ENCODE measurements at regions of chr13 and their contacts with region 1.

Region 1: DNA sequence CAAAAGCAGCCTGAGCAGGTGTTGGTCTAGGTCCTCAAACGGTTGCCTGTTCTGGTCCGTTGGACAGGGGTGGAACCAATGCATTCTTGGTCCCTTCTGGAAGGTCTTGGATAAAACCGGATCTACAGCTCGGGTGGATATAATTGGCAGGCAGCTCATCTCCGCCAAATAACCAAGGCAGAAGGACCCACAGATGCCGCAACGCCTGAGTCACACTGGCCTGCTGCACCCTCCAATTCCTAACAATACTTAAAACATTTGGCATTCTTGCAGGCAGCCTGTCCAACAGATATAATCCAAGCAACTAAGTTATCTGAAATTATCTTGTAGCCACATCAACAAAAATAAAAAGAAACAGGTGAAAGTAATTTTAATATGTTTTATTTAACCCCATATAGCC is 59.0 kb upstream of the FGF14 start:
- DNase-seq: no peak
- H3K4me3 Mint-ChIP-seq: no peak overlapping the region
- H3K27ac Mint-ChIP-seq: no peak overlapping the region
- H3K4me1 Mint-ChIP-seq: peaks cover 6% of the 10 kb centered on the region
- H3K27me3 Mint-ChIP-seq: peaks cover 9% of the 10 kb centered on the region

Region 2: GRCh38 chr13:101144808-101145419 is 1315.9 kb before region 1 on chr13:
- CTCF ChIA-PET with region 1: no interaction called
- intact Hi-C with region 1: loop called (anchors 1 kb)
- DNase-seq: peak; percentile 28
- H3K4me3 Mint-ChIP-seq: no peak overlapping the region
- H3K27ac Mint-ChIP-seq: no peak overlapping the region
- H3K4me1 Mint-ChIP-seq: no peaks in the 10 kb centered on the region
- H3K27me3 Mint-ChIP-seq: peaks cover 35% of the 10 kb centered on the region

Region 3: GRCh38 chr13:101942038-101942437 is 518.8 kb before region 1 on chr13:
- CTCF ChIA-PET with region 1: no interaction called
- intact Hi-C with region 1: loop called (anchors 1 kb)
- DNase-seq: peak; percentile 26
- H3K4me3 Mint-ChIP-seq: no peak overlapping the region
- H3K27ac Mint-ChIP-seq: no peak overlapping the region
- H3K4me1 Mint-ChIP-seq: no peaks in the 10 kb centered on the region
- H3K27me3 Mint-ChIP-seq: peaks cover 2% of the 10 kb centered on the region

Region 4: GRCh38 chr13:102141625-102142472 is 319.0 kb before region 1 on chr13:
- CTCF ChIA-PET with region 1: interaction called, 5 read pairs
- intact Hi-C with region 1: loop called (anchors 1 kb)
- DNase-seq: no peak
- H3K4me3 Mint-ChIP-seq: no peak overlapping the region
- H3K27ac Mint-ChIP-seq: no peak overlapping the region
- H3K4me1 Mint-ChIP-seq: no peaks in the 10 kb centered on the region
- H3K27me3 Mint-ChIP-seq: no peaks in the 10 kb centered on the region

Region 5: DNA sequence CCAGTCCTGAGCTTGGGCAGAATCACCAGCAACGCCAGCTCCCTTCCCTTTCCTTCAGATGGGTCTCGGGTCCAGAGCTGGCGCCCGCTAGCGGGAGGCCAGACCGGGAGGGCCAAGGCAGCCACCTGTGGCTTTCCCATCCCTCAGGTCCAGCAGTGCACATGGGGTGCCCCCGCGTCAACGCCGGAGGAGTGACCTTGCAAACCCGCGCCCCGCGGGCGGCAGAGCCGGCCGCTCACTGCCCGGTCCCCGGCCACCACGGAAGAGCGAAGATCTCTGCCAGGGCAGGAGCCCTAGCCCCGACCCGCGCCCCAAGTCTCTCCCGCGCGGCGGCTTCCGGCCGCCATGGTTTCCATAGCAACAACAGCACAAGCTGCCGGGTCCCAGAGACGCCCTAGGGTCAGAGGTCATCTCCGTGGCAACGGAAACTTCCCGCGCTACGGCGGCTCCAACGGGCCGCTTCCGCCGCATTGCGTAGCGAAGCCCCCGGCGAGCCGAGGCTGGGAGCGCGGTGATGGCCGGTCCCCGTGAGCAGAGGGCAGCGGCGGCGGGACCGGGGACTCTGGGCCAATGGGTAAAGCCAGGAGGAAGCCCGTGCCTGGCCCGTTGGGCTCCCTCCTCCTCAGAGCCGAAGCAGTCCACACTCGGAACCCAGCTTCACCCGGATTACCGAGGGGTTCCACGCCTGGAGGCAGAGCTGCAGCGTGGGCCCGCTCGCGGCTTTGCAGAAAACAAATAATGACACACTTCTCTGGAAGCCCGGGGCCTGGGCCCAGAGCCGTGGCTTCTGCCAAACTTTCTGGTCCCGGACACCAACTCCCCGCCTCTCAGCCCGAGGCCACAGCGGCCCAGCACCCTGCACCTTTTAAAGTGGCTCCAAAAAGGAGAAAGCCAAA is 66.4 kb before region 1 on chr13:
- CTCF ChIA-PET with region 1: interaction called, 3 read pairs
- intact Hi-C with region 1: loop called (anchors 2 kb)
- DNase-seq: peak; percentile 97
- H3K4me3 Mint-ChIP-seq: peak overlapping the region; percentile 79
- H3K27ac Mint-ChIP-seq: peak overlapping the region; percentile 69
- H3K4me1 Mint-ChIP-seq: peaks cover 17% of the 10 kb centered on the region
- H3K27me3 Mint-ChIP-seq: peaks cover 16% of the 10 kb centered on the region

Region 6: DNA sequence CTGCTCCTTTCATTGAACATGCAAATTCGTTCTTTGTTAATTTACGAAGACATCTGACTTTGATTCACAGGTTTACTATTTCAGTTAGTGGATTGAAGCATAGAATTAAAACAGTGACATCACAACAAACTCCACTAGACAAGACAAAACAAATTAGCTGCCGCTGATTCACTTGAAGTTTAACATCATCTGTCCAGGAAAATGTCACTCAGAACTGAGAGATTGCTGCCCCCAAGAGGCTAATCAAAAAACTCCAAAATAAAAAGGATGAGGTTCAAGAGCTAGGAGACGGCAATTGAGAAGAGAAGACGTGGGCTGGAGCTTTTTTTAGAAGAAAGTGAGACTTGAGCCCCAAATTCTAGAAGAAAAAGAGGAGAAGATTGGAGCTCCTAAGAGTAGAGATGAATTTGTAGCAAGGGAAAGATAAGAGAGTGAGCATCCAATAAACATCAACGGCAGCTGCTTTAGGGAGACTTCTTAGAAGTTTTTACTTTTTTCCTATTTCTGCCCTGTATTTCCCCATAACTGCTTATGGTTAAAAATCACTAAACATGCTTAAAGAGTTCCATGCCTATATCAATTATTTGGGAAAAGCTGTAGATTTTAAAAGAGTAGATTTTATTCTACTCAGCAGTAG is 95.2 kb after region 1 on chr13:
- CTCF ChIA-PET with region 1: no interaction called
- intact Hi-C with region 1: loop called (anchors 1 kb)
- DNase-seq: peak; percentile 27
- H3K4me3 Mint-ChIP-seq: no peak overlapping the region
- H3K27ac Mint-ChIP-seq: no peak overlapping the region
- H3K4me1 Mint-ChIP-seq: peaks cover 3% of the 10 kb centered on the region
- H3K27me3 Mint-ChIP-seq: peaks cover 4% of the 10 kb centered on the region